Heart left ventricle (tissue), 16 donors: ENCODE measurements at regions of chr1 and their contacts with region 1.

Region 1: DNA sequence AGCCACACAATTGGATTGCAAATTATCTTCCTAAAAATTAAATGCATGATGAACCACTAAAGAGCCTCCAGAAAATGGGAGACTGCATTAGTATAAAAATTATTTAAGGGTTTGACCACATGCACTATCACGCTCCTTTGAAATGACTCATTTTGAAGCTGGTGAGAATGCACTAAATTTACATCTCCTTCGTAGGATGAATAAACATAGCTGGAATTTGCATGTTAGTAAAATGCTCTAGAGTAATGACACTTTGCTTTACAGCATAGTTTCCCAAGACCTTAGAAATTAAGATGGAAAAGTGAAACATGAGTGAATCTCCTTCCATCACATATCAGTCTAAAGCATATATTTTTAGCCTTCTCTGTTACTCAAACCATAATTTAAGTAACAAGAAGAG is 2.4 kb downstream of the PLPPR4 start:
- DNase-seq: no peak
- ATAC-seq: no peak
- H3K4me3 ChIP-seq: no peak overlapping the region
- H3K27ac ChIP-seq: no peak overlapping the region
- H3K4me1 ChIP-seq: peaks cover 0 to 12% (median 1%) of the 10 kb centered on the region in 12 donors
- H3K27me3 ChIP-seq: peaks cover 0 to 16% (median 3%) of the 10 kb centered on the region in 9 donors
- CTCF ChIP-seq: no peak
- POLR2A ChIP-seq: no peak

Region 2: DNA sequence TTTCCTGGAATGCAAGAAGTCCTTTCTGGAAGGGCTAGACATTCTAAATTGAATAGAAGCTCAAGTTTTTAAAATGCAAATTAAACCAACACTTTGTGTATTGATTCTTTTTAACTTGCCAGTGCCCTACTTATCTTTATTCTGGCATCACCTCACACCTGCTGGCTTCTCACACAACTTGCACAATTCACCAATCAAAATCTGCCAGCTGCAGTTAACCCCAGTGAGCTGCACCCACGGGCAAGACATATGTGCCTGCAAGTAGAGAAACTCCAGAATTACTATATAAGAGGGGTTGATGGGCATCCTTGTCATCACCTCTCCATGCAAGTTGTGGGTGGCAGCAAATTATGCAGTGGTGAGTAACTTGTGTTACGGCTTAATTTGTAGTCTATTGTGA is 14.1 kb before region 1 on chr1:
- intact Hi-C with region 1: loop called in 1 of 10 experiments (anchors 1 kb)
- DNase-seq: no peak
- ATAC-seq: no peak
- H3K4me3 ChIP-seq: no peak overlapping the region
- H3K27ac ChIP-seq: no peak overlapping the region
- H3K4me1 ChIP-seq: no peaks in the 10 kb centered on the region
- H3K27me3 ChIP-seq: no peaks in the 10 kb centered on the region
- CTCF ChIP-seq: no peak
- POLR2A ChIP-seq: no peak